HEK293 (cell line): ENCODE measurements at regions of chr2 and their contacts with region 1.

Region 1: DNA sequence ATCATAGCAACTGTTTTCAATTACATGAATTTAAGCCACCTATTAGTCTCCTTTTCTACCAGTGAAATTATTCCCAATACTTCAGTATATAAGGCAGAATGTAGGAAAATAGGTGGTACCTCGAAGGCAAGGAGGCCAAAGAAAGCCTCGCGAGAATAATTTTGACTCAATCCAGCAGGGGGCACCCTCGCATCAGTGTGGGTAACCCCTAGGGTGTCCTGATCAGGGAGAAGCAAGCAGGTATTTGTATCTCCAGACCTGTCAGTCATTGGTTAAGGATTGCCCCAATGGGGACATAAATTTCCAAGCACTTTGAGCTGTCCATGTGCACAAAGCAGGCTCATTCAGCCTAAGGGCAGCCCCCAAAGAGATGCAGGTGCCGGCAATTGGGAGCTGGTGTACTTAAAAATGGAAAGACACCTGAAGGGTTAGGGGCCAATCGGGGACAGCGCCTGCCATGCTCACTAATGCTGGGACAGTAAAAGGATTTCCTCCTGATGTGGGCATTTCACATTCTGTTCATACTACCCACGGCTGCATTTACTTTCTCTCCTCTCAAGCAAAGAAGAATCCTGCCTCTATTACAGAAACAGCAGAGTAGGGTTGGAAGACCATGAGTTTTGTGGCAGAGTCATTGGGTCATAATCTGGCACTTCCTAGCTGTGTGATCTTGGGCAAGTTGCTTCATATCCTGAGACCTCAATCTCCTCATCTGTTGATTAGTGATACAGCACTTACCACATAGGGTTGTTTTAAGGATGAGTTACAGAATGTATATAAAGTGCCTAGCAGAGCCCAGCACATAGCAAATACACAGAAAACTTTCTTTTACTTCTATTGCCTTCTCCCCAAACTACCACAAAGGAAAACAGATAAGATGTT is 136.1 kb downstream of the ICOS start:
- H3K4me3 ChIP-seq: no peak overlapping the region
- H3K27ac ChIP-seq: no peak overlapping the region
- H3K4me1 ChIP-seq: peaks cover 12% of the 10 kb centered on the region; the same call in 1 of the 2 replicates
- CTCF ChIP-seq: 0 out of 2 replicates have a peak, but pooled peaks have one; percentile 27

Region 2: GRCh38 chr2:204108330-204108751 is 35.7 kb after region 1 on chr2:
- CTCF ChIA-PET with region 1: interaction called, 10 read pairs
- POLR2A ChIA-PET with region 1: no interaction called
- H3K4me3 ChIP-seq: no peak overlapping the region
- H3K27ac ChIP-seq: no peak overlapping the region
- H3K4me1 ChIP-seq: peaks cover 4% of the 10 kb centered on the region
- CTCF ChIP-seq: peak; percentile 43; the same call in 1 of the 2 replicates